GM12878 (cell line): ENCODE measurements at regions of chr6 and their contacts with region 1.

Region 1: GRCh38 chr6:42901536-42901957 is 14.3 kb upstream of the PTCRA start:
- DNase-seq: peak; percentile 54
- ATAC-seq: peak; percentile 99
- H3K4me3 ChIP-seq: no peak overlapping the region
- H3K27ac ChIP-seq: no peak overlapping the region
- H3K4me1 ChIP-seq: no peaks in the 10 kb centered on the region
- H3K27me3 ChIP-seq: no peaks in the 10 kb centered on the region
- CTCF ChIP-seq: peak; percentile 68 to 89 (median 78); a peak in 5 of 6 replicates
- EP300 ChIP-seq: no peak
- POLR2A ChIP-seq: no peak
- RAD21 ChIP-seq: peak; percentile 98

Region 2: DNA sequence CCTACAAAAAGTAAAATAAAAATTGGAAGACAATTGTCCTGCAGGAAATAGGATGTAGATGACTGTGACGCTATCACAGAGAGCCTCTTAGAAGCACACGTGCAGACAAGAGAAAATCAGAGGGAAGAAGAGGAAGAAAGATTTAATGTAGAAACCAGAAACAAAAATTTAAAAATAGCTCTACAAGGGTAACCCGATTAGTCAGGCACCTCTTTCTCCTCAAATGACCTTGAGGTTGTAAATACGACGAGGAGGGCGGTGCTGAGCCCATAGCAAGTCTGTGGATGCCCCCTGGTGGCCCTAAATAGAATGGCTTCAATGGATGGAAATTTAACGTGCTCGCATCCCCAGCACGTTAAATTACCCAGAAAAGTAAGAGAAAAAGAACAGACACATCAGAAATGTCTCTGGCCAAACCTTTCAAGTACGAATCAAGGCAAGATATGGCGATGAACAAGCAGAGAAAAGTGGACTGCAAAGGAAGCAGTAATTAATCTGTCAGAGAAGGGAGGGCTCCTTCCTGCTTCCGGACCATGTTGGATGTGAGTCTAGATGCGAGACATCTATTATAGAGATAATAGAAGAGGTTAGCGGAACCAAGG is 175.0 kb before region 1 on chr6:
- CTCF ChIA-PET with region 1: interaction called, 10 read pairs
- POLR2A ChIA-PET with region 1: no interaction called
- RAD21 ChIA-PET with region 1: interaction called, 3 read pairs
- SMC1A ChIA-PET with region 1: interaction called, 4 read pairs
- in situ Hi-C with region 1: no loop called
- intact Hi-C with region 1: loop called (anchors 2 kb)
- DNase-seq: peak; percentile 66
- ATAC-seq: peak; percentile 96
- H3K4me3 ChIP-seq: peak overlapping the region; percentile 58; the same call in 1 of the 2 replicates
- H3K27ac ChIP-seq: peak overlapping the region; percentile 60
- H3K4me1 ChIP-seq: peaks cover 10% of the 10 kb centered on the region; the same call in 1 of the 2 replicates
- H3K27me3 ChIP-seq: no peaks in the 10 kb centered on the region
- CTCF ChIP-seq: peak; percentile 76 to 97 (median 89)
- EP300 ChIP-seq: no peak
- POLR2A ChIP-seq: no peak
- RAD21 ChIP-seq: peak; percentile 92

Region 3: GRCh38 chr6:42928986-42929820 is 27.7 kb after region 1 on chr6 and contains the start of gene CNPY3:
- CTCF ChIA-PET with region 1: interaction called, 8 read pairs
- POLR2A ChIA-PET with region 1: interaction called, 7 read pairs
- RAD21 ChIA-PET with region 1: interaction called, 4 read pairs
- SMC1A ChIA-PET with region 1: interaction called, 5 read pairs
- in situ Hi-C with region 1: no loop called
- intact Hi-C with region 1: loop called (anchors 2 kb)
- DNase-seq: peak; percentile 98
- ATAC-seq: peak; percentile 88
- H3K4me3 ChIP-seq: peak within 1 kb of the TSS; percentile 93
- H3K27ac ChIP-seq: peak within 1 kb of the TSS; percentile 96
- H3K4me1 ChIP-seq: peaks cover 17% of the 10 kb centered on the region
- H3K27me3 ChIP-seq: no peaks in the 10 kb centered on the region
- CTCF ChIP-seq: no peak
- EP300 ChIP-seq: peak in 1 of 2 experiments; percentile 72; a peak in 1 of 4 replicates
- POLR2A ChIP-seq: peak; percentile 87
- RAD21 ChIP-seq: no peak
- polyA plus RNA-seq, gene CNPY3: 7.2 to 14.6 TPM

Region 4: GRCh38 chr6:43013843-43014433 is 112.4 kb after region 1 on chr6 and contains the starts of genes KLHDC3 and MEA1:
- CTCF ChIA-PET with region 1: interaction called, 19 read pairs
- POLR2A ChIA-PET with region 1: no interaction called
- RAD21 ChIA-PET with region 1: interaction called, 3 read pairs
- SMC1A ChIA-PET with region 1: interaction called, 3 read pairs
- in situ Hi-C with region 1: no loop called
- intact Hi-C with region 1: loop called (anchors 5 kb)
- DNase-seq: peak; percentile 100
- ATAC-seq: peak; percentile 96
- H3K4me3 ChIP-seq: peak within 1 kb of the TSS; percentile 85
- H3K27ac ChIP-seq: peak within 1 kb of the TSS; percentile 60
- H3K4me1 ChIP-seq: peaks cover 7% of the 10 kb centered on the region
- H3K27me3 ChIP-seq: no peaks in the 10 kb centered on the region
- CTCF ChIP-seq: no peak
- EP300 ChIP-seq: no peak
- POLR2A ChIP-seq: peak; percentile 82
- RAD21 ChIP-seq: no peak
- polyA plus RNA-seq, gene KLHDC3: 2.4 to 8.9 TPM
- polyA plus RNA-seq, gene MEA1: 90.7 to 105 TPM

Region 5: DNA sequence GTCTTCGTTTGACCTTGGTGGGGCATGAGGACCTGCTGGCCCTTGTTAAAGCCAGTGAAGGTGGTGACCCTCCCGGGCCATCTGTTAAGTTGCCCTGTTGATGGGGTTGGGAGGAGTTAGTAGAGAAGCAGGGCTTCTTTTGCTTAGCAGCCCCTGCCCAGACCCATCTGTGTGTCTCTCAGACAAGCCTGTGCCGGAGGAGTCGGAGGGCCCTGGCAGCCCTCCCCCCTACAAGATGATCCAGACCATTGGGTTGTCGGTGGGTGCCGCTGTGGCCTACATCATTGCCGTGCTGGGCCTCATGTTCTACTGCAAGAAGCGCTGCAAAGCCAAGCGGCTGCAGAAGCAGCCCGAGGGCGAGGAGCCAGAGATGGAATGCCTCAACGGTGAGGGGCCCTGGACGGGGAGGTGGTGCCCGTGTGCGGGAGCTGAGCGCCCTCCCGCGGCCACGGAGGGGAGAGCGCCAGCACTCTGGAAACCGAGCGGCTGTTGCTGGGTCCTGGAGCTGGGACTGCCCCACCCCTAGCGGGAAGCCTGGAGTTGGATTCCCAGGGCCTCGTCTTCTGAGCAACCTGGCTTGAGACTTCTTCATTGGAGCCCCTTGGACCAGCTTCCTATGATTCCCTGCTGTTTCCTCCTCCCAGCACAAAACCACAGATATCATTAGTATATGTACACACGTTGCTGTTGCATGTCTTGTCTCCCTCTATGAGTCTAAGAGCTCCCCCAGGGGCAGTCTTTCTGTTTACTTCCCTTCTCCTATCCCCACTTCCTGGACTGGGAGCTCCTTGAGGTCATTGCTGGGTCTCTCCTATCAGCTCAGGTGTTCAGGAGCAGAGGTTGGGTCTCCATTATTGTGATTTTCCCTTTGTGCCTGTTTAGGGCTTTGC is 241.9 kb after region 1 on chr6:
- CTCF ChIA-PET with region 1: interaction called, 28 read pairs
- POLR2A ChIA-PET with region 1: no interaction called
- RAD21 ChIA-PET with region 1: interaction called, 6 read pairs
- SMC1A ChIA-PET with region 1: interaction called, 19 read pairs
- in situ Hi-C with region 1: loop called (anchors 5 kb)
- intact Hi-C with region 1: loop called (anchors 1 kb)
- DNase-seq: no peak
- ATAC-seq: peak; percentile 96
- H3K4me3 ChIP-seq: no peak overlapping the region
- H3K27ac ChIP-seq: no peak overlapping the region
- H3K4me1 ChIP-seq: no peaks in the 10 kb centered on the region
- H3K27me3 ChIP-seq: no peaks in the 10 kb centered on the region; a peak in 1 of 4 replicates
- CTCF ChIP-seq: peak; percentile 85 to 97 (median 93); a peak in 5 of 6 replicates
- EP300 ChIP-seq: no peak
- POLR2A ChIP-seq: no peak
- RAD21 ChIP-seq: peak; percentile 90